ENCODE measurements at regions of chr11 and their contacts with region 1.

Region 1: DNA sequence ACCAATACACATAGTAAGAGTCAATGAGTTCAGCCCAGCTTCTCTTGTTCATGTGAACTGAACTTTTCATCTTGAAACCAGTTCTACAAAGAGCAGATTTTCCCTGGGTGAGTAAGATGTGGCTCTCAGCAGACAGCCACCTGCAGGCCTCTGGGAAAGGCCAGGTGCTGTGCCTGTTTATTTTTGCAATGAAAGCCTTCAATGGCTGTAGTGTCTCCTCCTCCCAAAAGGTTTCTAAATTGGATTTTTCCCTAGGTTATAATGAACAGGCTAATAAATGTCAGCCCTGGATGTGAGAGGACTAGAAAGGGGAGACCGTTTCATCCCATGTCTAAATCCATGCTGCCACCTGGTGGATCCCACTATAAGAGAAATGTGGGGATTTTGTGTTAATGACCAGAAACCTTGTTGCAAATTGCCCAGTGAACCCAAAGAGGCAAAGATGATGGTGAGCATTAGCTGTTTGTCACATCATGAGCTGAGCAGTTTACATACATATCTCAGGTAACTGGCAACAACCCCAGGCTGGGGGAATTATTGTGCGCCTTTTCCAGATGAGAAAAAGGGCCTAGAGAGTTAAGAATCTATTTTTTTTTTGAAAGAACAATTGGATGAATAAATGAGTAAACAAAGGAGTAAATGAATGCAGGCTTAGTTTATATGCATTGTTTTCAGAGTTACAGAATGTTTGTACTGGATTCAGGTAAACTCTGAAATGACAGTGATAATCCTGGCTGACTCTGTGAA is 12.7 kb downstream of the C11orf91 start:
- DNase-seq: no peak
- ATAC-seq: peak; percentile 42
- H3K4me3 ChIP-seq: no peak overlapping the region
- H3K27ac ChIP-seq: no peak overlapping the region
- H3K4me1 ChIP-seq: peaks cover 28% of the 10 kb centered on the region
- H3K27me3 ChIP-seq: no peaks in the 10 kb centered on the region
- CTCF ChIP-seq: peak; percentile 61

Region 2: GRCh38 chr11:33362051-33362910 is 325.6 kb before region 1 on chr11:
- intact Hi-C with region 1: loop called (anchors 5 kb)
- DNase-seq: no peak
- ATAC-seq: peak; percentile 57
- H3K4me3 ChIP-seq: no peak overlapping the region
- H3K27ac ChIP-seq: no peak overlapping the region
- H3K4me1 ChIP-seq: no peaks in the 10 kb centered on the region
- H3K27me3 ChIP-seq: no peaks in the 10 kb centered on the region
- CTCF ChIP-seq: peak; percentile 79